ENCODE measurements at regions of chr18 and their contacts with region 1.

Region 1: DNA sequence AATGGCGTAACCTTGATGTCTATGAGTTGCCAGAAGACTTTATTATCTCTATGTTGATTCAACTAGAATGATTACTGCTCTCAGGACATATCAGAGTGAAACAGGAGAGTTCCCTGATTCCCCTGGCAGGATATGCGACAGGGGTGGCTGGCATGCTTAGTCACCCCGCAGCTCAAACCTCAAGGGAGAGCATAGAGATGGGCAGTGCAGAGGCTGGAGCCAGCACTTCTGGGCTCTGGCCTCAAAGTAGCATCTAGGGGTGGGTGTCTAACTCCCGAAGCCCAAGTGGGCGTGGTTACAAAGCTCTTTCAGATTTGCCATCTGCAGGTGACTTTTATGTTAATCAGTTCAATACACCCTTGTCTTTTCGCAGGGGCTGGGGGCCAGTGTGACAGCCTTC is 391.6 kb downstream of the ADCYAP1 start:
- DNase-seq: no peak
- ATAC-seq: no peak
- H3K4me3 ChIP-seq: no peak overlapping the region
- H3K27ac ChIP-seq: no peak overlapping the region
- H3K4me1 ChIP-seq: no peaks in the 10 kb centered on the region
- H3K27me3 ChIP-seq: no peaks in the 10 kb centered on the region
- CTCF ChIP-seq: no peak
- POLR2A ChIP-seq: no peak
- RAD21 ChIP-seq: no peak

Region 2: DNA sequence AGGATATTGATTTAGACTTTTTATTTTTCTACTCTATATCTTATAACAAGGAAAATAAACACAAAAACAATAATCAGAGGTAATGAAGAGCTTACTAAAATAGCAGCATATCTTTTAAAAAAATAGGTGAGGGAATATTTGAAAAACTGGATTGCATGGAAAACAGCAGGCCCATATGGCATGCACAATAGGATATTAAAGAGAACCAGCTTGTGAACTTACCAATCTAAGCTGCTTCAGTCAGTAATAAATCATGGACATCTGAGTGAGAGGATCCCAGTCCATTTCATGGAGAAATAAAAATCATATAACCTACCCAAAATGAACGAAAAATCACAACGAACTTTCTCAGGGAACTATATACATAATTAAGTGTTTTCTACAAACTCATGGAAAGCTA is 243.0 kb after region 1 on chr18:
- CTCF ChIA-PET with region 1: no interaction called
- POLR2A ChIA-PET with region 1: no interaction called
- dilution Hi-C with region 1: no loop called
- in situ Hi-C with region 1: no loop called
- intact Hi-C with region 1: no loop called
- DNase-seq: no peak
- ATAC-seq: no peak
- H3K4me3 ChIP-seq: no peak overlapping the region
- H3K27ac ChIP-seq: no peak overlapping the region
- H3K4me1 ChIP-seq: no peaks in the 10 kb centered on the region
- H3K27me3 ChIP-seq: no peaks in the 10 kb centered on the region
- CTCF ChIP-seq: no peak
- POLR2A ChIP-seq: no peak
- RAD21 ChIP-seq: no peak

Region 3: DNA sequence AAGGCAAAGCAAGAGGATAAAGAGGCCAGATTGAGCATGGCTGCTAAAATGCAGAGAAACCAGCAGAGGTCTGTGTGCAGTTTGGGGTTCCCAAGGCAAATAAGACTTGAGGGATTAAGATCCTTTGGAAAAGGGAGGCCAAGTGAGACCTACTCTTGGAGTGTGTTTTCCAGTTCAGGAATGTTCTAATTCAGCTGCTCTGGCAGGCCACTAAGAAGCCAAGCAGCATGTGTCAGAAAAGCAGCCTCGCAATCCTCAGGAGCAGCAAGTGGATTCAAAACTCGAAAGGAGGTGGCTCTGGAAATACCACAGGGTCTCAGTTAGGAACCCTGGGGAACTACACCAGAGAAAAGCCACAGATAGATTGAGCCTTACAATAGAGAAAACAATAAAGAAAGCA is 705.9 kb after region 1 on chr18:
- CTCF ChIA-PET with region 1: no interaction called
- POLR2A ChIA-PET with region 1: no interaction called
- dilution Hi-C with region 1: no loop called
- in situ Hi-C with region 1: loop called (anchors 25 kb)
- intact Hi-C with region 1: no loop called
- DNase-seq: no peak
- ATAC-seq: no peak
- H3K4me3 ChIP-seq: no peak overlapping the region
- H3K27ac ChIP-seq: no peak overlapping the region
- H3K4me1 ChIP-seq: no peaks in the 10 kb centered on the region
- H3K27me3 ChIP-seq: no peaks in the 10 kb centered on the region
- CTCF ChIP-seq: no peak
- POLR2A ChIP-seq: no peak
- RAD21 ChIP-seq: no peak